IMR-90 (cell line): ENCODE measurements at regions of chr3 and their contacts with region 1.

Region 1: DNA sequence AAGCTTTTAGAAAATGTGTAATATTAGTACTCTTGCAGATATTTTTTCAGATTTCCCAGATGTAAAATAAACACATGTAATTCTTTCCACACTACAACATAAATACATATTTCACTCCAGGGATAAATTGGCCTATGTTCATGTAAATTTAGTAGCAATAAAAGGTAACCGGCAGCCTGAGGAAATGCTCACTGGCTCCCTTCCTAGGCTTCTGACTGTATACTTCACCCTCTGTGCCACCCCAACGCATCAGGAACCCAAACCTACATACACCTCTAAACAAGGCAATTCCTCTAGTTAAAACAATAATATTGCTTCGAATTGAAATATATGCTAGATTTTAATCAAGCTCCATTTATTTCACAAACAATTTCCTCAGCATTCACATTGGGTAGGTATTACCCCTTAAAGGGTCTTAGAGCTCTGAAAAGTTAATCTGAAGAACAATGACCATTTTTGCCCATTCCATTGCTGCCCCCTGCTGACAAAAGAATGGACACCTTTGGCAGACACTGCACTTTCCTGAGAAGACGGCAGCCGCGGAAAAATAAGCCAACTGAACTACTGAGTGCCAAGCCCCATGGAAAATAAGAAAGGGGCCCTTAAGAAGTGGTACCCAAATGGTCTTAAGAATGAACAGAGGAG is 212.5 kb downstream of the OSBPL10 start:
- DNase-seq: peak; percentile 58
- ATAC-seq: peak; percentile 74
- H3K4me3 ChIP-seq: no peak overlapping the region
- H3K27ac ChIP-seq: no peak overlapping the region
- H3K4me1 ChIP-seq: no peaks in the 10 kb centered on the region
- H3K27me3 ChIP-seq: no peaks in the 10 kb centered on the region
- CTCF ChIP-seq: peak; percentile 64
- POLR2A ChIP-seq: 0 out of 2 replicates have a peak, but pooled peaks have one; percentile 28
- RAD21 ChIP-seq: peak; percentile 81

Region 2: DNA sequence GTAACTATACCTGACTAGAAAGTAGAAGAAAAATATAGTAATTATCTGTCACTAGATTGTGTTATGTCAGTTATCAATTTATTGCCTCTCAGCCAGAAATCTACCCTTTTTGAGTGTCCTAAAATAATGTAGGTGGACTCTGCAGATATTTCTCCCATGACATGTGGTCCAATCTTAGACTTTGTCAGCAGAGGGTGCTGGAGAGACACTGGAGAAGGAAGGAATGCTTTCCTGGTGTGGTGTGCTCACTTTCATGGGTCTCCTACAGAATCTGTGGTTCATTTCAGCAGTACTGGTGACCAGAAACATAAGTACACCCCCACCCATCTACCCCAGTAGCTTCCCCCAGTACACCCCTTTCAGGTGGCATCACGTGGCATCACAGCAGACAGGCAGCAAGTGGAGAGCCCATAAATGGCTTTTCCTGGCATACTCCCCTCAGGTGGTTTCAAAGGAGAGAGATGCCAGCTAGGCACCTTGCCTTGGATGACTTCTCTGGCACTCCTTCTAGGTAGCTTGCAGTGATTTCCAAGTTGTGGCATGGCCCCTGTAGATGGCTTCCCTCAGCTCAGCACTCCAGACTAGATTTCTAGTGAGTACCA is 988.8 kb before region 1 on chr3:
- CTCF ChIA-PET with region 1: no interaction called
- POLR2A ChIA-PET with region 1: no interaction called
- dilution Hi-C with region 1: no loop called
- in situ Hi-C with region 1: loop called (anchors 25 kb)
- intact Hi-C with region 1: loop called (anchors 5 kb)
- DNase-seq: peak; percentile 38
- ATAC-seq: peak; percentile 83
- H3K4me3 ChIP-seq: no peak overlapping the region
- H3K27ac ChIP-seq: no peak overlapping the region
- H3K4me1 ChIP-seq: no peaks in the 10 kb centered on the region
- H3K27me3 ChIP-seq: peaks cover 12% of the 10 kb centered on the region
- CTCF ChIP-seq: peak; percentile 60
- POLR2A ChIP-seq: no peak
- RAD21 ChIP-seq: peak; percentile 73

Region 3: DNA sequence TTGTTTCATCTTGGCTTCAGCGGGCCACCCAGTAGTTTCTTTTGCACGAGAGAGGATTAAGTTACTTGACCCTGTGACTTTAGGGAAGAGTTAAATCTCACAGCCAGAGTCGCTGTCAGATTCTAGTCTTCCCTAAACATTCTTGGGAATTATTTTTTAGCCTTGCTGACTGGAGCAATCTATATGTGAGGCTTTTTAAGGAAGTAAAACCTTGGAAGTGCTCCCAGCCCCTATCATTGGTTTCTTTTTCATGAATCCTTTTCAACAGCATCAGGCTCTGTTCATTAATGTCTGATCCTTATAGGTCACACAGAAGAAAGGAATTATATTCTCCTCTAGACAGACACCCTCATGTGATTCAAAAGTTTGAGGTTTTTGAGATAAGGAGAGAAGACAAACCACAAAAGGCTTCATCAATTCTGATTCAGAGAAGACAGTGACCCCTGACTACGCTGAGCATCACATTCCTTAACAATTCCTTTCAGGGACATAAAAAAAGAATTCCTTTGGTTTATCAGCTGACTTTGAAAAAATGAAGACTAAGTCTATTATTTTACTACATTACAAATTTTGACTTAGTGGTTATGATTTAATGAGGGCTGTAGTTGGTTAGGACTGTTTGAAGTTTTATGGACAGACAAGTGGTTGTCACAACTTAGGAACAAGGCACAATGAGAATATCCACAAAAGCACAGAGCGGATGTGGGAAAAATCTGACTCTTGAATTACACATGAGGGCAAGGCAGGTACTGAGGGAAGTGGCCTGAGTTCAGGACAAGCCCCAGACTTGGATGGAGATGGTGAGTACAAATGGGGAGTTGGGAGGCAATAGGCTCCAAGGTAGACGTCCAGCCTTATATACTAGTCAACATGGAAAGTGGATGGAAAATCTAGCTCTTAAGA is 407.0 kb before region 1 on chr3:
- CTCF ChIA-PET with region 1: no interaction called
- POLR2A ChIA-PET with region 1: no interaction called
- dilution Hi-C with region 1: no loop called
- in situ Hi-C with region 1: no loop called
- intact Hi-C with region 1: loop called (anchors 10 kb)
- DNase-seq: peak; percentile 86
- ATAC-seq: peak; percentile 74
- H3K4me3 ChIP-seq: peak overlapping the region; percentile 16; the same call in 1 of the 2 replicates
- H3K27ac ChIP-seq: peak overlapping the region; percentile 23; the same call in 1 of the 2 replicates
- H3K4me1 ChIP-seq: peaks cover 10% of the 10 kb centered on the region
- H3K27me3 ChIP-seq: no peaks in the 10 kb centered on the region
- CTCF ChIP-seq: no peak
- POLR2A ChIP-seq: no peak
- RAD21 ChIP-seq: no peak

Region 4: DNA sequence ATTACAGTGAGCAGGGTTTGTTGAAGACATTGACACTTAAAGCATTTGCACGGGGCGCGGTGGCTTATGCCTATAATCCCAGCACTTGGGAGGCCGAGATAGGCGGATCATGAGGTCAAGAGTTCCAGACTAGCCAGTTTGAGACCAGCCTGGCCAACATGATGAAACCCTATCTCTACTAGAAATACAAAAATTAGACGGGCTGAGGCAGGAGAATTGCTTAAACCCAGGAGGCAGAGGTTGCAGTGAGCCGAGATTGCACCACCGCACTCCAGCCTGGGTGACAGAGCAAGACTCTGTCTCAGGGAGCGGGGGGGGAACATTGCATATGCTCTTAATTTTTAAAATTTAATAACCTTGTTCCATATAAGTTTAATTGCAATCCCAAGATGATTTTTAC is 224.0 kb before region 1 on chr3:
- CTCF ChIA-PET with region 1: no interaction called
- POLR2A ChIA-PET with region 1: no interaction called
- dilution Hi-C with region 1: no loop called
- in situ Hi-C with region 1: loop called (anchors 10 kb)
- intact Hi-C with region 1: no loop called
- DNase-seq: no peak
- ATAC-seq: peak; percentile 58
- H3K4me3 ChIP-seq: no peak overlapping the region
- H3K27ac ChIP-seq: no peak overlapping the region
- H3K4me1 ChIP-seq: peaks cover 6% of the 10 kb centered on the region
- H3K27me3 ChIP-seq: no peaks in the 10 kb centered on the region
- CTCF ChIP-seq: no peak
- POLR2A ChIP-seq: no peak
- RAD21 ChIP-seq: no peak

Region 5: GRCh38 chr3:31610700-31611275 is 157.8 kb before region 1 on chr3:
- CTCF ChIA-PET with region 1: interaction called, 3 read pairs
- POLR2A ChIA-PET with region 1: no interaction called
- dilution Hi-C with region 1: no loop called
- in situ Hi-C with region 1: no loop called
- intact Hi-C with region 1: loop called (anchors 1 kb)
- DNase-seq: peak; percentile 66
- ATAC-seq: peak; percentile 55
- H3K4me3 ChIP-seq: no peak overlapping the region
- H3K27ac ChIP-seq: no peak overlapping the region
- H3K4me1 ChIP-seq: no peaks in the 10 kb centered on the region
- H3K27me3 ChIP-seq: no peaks in the 10 kb centered on the region
- CTCF ChIP-seq: peak; percentile 76
- POLR2A ChIP-seq: no peak
- RAD21 ChIP-seq: peak; percentile 71

Region 6: GRCh38 chr3:32143849-32144757 is 375.5 kb after region 1 on chr3:
- CTCF ChIA-PET with region 1: no interaction called
- POLR2A ChIA-PET with region 1: no interaction called
- dilution Hi-C with region 1: no loop called
- in situ Hi-C with region 1: no loop called
- intact Hi-C with region 1: loop called (anchors 2 kb)
- DNase-seq: peak; percentile 97
- ATAC-seq: peak; percentile 95
- H3K4me3 ChIP-seq: no peak overlapping the region
- H3K27ac ChIP-seq: no peak overlapping the region
- H3K4me1 ChIP-seq: peaks cover 10% of the 10 kb centered on the region
- H3K27me3 ChIP-seq: no peaks in the 10 kb centered on the region
- CTCF ChIP-seq: peak; percentile 83
- POLR2A ChIP-seq: no peak
- RAD21 ChIP-seq: peak; percentile 83